Tibial artery (tissue), 4 donors: ENCODE measurements at regions of chr4 and their contacts with region 1.

Region 1: GRCh38 chr4:185656467-185656931 is 121.2 kb upstream of the PDLIM3 start:
- DNase-seq: peak; percentile 61 to 90
- H3K4me3 ChIP-seq: peak overlapping the region; percentile 67 to 69
- H3K27ac ChIP-seq: peak overlapping the region; percentile 89
- H3K4me1 ChIP-seq: peaks cover 0 to 37% (median 6%) of the 10 kb centered on the region in 4 donors
- H3K27me3 ChIP-seq: no peaks in the 10 kb centered on the region
- CTCF ChIP-seq: peak; percentile 66 to 69

Region 2: GRCh38 chr4:185730387-185730786 is 73.9 kb after region 1 on chr4:
- intact Hi-C with region 1: loop called (anchors 10 kb)
- DNase-seq: no peak
- H3K4me3 ChIP-seq: no peak overlapping the region
- H3K27ac ChIP-seq: peak overlapping the region; percentile 84 to 89
- H3K4me1 ChIP-seq: peaks cover 0 to 95% (median 34%) of the 10 kb centered on the region in 4 donors
- H3K27me3 ChIP-seq: no peaks in the 10 kb centered on the region
- CTCF ChIP-seq: no peak